ENCODE measurements at regions of chr15 and their contacts with region 1.

Region 1: GRCh38 chr15:48861813-48862431 is 16.0 kb upstream of the EID1 start:
- DNase-seq: no peak
- ATAC-seq: peak; percentile 68

Region 2: DNA sequence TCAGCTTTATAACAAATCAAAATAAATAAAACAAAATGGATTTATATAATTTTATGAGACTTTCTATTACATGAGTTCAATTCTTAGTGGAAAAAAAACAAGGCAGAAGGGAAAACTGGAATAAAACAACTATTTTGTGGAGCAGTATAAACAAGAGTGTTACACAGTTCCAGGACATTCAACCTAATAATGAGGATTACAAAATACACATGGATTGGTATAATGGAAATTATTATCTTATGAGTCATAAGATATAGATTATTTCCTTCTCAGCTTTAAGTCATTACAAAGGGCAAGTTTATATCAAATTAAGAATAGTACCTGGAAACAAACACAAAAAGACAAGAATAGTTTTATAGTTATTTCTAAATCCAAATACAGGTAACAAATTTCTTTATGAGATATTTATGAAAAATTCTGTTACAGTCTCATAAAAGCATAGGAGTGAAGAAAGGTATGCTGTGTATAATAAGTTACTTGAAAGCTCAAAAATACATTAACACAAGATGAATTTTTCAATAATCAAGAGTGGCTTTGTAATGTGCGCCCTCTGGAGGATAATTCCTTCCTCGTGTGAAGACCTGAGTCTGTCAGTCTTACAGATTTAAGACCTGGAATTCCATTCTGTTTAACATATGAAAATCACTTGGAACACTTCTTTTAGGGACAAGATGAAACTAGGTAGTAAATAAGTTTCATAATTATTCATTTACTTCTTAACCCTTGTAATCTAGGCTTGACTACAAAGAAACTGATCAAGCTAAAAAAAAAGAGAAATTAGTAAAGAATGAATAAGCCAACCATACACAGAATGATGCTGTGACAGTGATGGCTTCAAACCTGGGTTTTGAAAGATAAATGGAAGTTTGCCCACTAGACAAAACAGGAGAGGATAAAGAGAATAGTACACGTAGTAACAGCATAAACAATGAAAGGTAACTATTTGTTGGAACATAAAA is 284.0 kb after region 1 on chr15:
- intact Hi-C with region 1: loop called (anchors 5 kb)
- DNase-seq: no peak
- ATAC-seq: no peak

Region 3: GRCh38 chr15:49421991-49422390 is 560.1 kb after region 1 on chr15:
- intact Hi-C with region 1: loop called (anchors 5 kb)
- DNase-seq: peak; percentile 82
- ATAC-seq: peak; percentile 68

Region 4: DNA sequence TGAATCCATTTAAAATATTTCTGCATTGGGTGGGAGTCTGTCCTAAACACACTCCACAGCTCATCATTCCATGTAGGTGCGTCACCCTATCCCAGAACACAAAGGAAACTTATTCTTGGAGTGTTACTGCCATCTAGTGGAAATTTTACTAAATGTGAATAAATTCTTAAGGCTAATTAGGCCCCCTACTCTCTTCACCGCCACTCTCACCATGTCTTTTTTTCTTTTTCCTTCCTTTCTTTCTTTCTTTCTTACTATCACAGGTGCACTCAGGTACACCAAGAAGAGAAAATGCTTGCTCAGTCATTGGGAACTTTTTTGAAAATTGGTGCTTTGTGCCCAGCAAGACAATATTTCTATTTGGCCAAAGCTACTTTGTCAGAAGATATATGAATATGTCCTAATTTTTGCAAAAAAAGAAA is 1283.5 kb after region 1 on chr15:
- intact Hi-C with region 1: loop called (anchors 2 kb)
- DNase-seq: no peak
- ATAC-seq: peak; percentile 79

Measured in Right ventricle myocardium inferior (tissue), 1 donor.